Aorta (tissue), 5 donors: ENCODE measurements at regions of chrX and their contacts with region 1.

Region 1: DNA sequence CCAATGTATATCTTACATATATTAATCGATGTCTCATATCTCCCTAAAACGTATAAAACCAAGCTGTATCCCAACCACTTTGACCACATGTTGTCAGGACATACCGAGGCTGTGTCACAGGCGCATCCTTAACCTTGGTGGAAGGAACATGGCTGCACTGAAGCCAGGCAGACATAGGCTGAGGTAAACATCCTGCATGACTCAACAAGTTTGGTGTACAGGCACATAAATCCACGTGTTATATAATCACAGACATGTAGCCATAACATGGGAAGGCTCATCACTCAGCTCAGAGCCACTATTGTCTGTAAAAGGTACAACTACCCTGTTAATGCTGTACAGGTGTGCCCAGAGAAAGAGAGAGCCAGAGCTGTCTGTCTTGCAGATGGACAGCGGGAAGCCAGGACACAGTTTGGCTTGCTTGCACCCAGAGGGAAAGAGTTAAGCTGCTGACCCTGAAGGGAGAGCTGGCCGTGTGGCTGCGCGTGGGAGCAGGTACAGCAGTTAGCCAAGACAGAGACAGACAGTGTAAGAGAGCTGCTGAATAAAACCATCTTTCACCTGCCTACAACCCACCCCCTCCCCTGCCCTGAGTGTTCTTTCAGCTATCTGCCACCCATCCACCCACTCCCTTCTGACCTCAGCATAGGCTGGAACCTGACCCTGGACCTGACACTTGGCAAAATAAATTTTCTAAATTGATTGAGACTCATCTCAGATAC is 22.3 kb upstream of the ZBTB33 start:
- DNase-seq: no peak
- ATAC-seq: no peak
- H3K4me3 ChIP-seq: no peak overlapping the region
- H3K27ac ChIP-seq: no peak overlapping the region
- H3K4me1 ChIP-seq: no peaks in the 10 kb centered on the region
- H3K27me3 ChIP-seq: no peaks in the 10 kb centered on the region

Region 2: DNA sequence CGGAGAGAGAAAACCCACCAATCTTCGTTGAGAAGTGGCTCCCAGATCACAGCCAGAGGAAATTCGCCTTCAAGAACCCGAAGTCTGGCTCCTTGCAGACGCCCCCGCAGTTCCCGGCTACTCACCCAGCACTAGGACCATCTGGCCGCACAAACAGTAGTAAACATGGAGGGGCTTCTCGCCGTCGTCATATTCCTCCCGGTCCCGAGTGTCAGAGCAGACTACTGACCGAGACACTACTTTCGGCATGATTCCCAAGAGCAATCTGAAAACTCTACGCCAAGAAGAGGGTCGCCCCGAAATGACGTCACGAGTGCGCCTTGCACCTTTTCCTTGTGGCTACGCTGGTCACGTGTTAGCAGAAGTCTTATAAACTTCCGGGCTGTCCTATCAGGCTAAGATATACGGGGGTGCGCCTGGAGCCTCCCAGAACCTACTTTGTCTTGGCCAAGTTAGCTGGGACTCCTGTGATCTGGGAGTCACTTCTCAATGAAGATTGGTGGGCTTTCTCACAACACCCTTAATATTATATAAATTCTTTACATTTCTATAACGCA is 663.2 kb before region 1 on chrX and contains the start of gene STEEP1:
- intact Hi-C with region 1: no loop called
- DNase-seq: peak; percentile 93 to 95
- ATAC-seq: peak; percentile 92
- H3K4me3 ChIP-seq: peak within 1 kb of the TSS; percentile 57 to 92
- H3K27ac ChIP-seq: peak within 1 kb of the TSS in 1 of 2 donors; percentile 33
- H3K4me1 ChIP-seq: no peaks in the 10 kb centered on the region
- H3K27me3 ChIP-seq: no peaks in the 10 kb centered on the region
- total RNA-seq, gene STEEP1: 16.7 to 18.4 TPM

Region 3: DNA sequence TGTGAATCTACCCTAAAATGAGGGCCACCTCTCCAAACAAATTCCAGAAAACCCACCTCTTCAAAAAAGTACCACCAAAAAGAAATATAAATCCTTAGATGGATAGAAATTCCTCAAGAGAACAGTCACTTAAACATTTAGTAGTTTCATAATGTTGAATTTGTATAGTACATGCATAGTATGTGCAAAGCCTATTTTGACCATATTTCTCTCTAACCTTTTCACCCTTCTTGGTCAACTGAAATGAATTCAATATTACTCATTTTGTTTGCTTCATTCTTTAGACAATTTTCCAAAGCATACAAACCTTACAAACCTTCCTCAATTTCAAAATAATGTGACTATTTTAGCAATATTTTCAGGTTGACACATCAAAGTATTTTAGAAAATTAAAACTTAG is 116.7 kb before region 1 on chrX:
- intact Hi-C with region 1: loop called in 1 of 2 experiments (anchors 10 kb)
- DNase-seq: no peak
- ATAC-seq: no peak
- H3K4me3 ChIP-seq: no peak overlapping the region
- H3K27ac ChIP-seq: no peak overlapping the region
- H3K4me1 ChIP-seq: no peaks in the 10 kb centered on the region
- H3K27me3 ChIP-seq: no peaks in the 10 kb centered on the region

Region 4: GRCh38 chrX:120813982-120814381 is 585.6 kb after region 1 on chrX:
- intact Hi-C with region 1: no loop called
- DNase-seq: no peak
- ATAC-seq: no peak
- H3K4me3 ChIP-seq: no peak overlapping the region
- H3K27ac ChIP-seq: no peak overlapping the region
- H3K4me1 ChIP-seq: no peaks in the 10 kb centered on the region
- H3K27me3 ChIP-seq: no peaks in the 10 kb centered on the region